ENCODE measurements at regions of chr2 and their contacts with region 1.

Region 1: GRCh38 chr2:84925724-84926376 is 20.4 kb downstream of the TMSB10 start:
- DNase-seq: peak; percentile 97
- H3K4me3 ChIP-seq: peak overlapping the region; percentile 53
- H3K27ac ChIP-seq: peak overlapping the region; percentile 62
- H3K4me1 ChIP-seq: peaks cover 18% of the 10 kb centered on the region
- H3K27me3 ChIP-seq: no peaks in the 10 kb centered on the region
- CTCF ChIP-seq: peak; percentile 95

Region 2: GRCh38 chr2:84495539-84496146 is 430.2 kb before region 1 on chr2:
- CTCF ChIA-PET with region 1: no interaction called
- POLR2A ChIA-PET with region 1: no interaction called
- intact Hi-C with region 1: loop called (anchors 5 kb)
- DNase-seq: peak; percentile 78
- H3K4me3 ChIP-seq: no peak overlapping the region
- H3K27ac ChIP-seq: no peak overlapping the region
- H3K4me1 ChIP-seq: no peaks in the 10 kb centered on the region
- H3K27me3 ChIP-seq: no peaks in the 10 kb centered on the region
- CTCF ChIP-seq: peak; percentile 67

Region 3: GRCh38 chr2:84905181-84906107 is 20.4 kb before region 1 on chr2 and contains the start of gene TMSB10:
- CTCF ChIA-PET with region 1: interaction called, 14 read pairs
- POLR2A ChIA-PET with region 1: interaction called, 5 read pairs
- intact Hi-C with region 1: loop called (anchors 2 kb)
- DNase-seq: peak; percentile 90
- H3K4me3 ChIP-seq: peak within 1 kb of the TSS; percentile 96
- H3K27ac ChIP-seq: peak within 1 kb of the TSS; percentile 96
- H3K4me1 ChIP-seq: peaks cover 13% of the 10 kb centered on the region
- H3K27me3 ChIP-seq: no peaks in the 10 kb centered on the region
- CTCF ChIP-seq: no peak
- total RNA-seq, gene TMSB10: 2,146 and 2,488 TPM in 2 replicates

Region 4: DNA sequence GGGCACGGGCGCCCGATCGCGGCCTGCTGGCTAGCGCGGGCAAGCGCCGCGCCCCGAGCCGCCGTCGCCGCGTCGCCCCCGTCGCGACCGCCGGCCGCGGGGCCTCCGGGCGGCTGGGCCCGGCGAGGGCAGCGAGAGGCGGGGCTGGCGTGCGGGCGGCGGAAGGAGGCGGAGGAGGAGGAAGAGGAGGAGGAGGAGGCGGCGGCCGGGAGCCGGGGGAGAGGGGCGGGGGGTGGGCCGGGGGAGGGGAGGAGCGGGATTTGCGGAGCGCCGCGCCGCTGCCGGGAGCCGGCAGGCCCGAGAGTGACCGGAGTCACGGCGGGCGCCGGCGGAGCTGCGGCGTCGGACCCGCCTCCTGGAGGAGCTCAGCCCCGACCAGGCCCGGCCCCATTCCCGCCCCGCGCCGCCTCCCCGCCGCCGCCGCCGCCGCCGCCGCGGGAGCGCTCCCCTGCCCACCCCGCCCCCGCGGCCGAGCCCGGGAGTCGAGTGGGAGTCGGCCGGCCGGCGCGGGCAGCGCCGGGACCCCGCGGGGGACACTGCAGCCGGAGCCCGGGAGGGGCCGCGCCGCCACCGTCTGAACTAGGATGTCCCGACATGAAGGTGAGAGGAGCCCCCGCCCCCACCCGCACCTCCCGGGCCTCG is 45.1 kb after region 1 on chr2 and contains the start of gene KCMF1:
- CTCF ChIA-PET with region 1: interaction called, 3 read pairs
- POLR2A ChIA-PET with region 1: no interaction called
- intact Hi-C with region 1: loop called (anchors 1 kb)
- DNase-seq: peak; percentile 78
- H3K4me3 ChIP-seq: peak within 1 kb of the TSS; percentile 97
- H3K27ac ChIP-seq: peak within 1 kb of the TSS; percentile 99
- H3K4me1 ChIP-seq: peaks cover 4% of the 10 kb centered on the region
- H3K27me3 ChIP-seq: no peaks in the 10 kb centered on the region
- CTCF ChIP-seq: no peak
- total RNA-seq, gene KCMF1: 108 and 110 TPM in 2 replicates

Region 5: GRCh38 chr2:85302121-85302520 is 376.3 kb after region 1 on chr2:
- CTCF ChIA-PET with region 1: no interaction called
- POLR2A ChIA-PET with region 1: no interaction called
- intact Hi-C with region 1: loop called (anchors 2 kb)
- DNase-seq: no peak
- H3K4me3 ChIP-seq: no peak overlapping the region
- H3K27ac ChIP-seq: no peak overlapping the region
- H3K4me1 ChIP-seq: peaks cover 3% of the 10 kb centered on the region
- H3K27me3 ChIP-seq: no peaks in the 10 kb centered on the region
- CTCF ChIP-seq: no peak